ENCODE measurements at regions of chr13 and their contacts with region 1.

Region 1: GRCh38 chr13:81017513-81018152 is 676.7 kb upstream of the SPRY2 start:
- DNase-seq: peak; percentile 61
- H3K4me3 Mint-ChIP-seq: no peak overlapping the region
- H3K27ac Mint-ChIP-seq: no peak overlapping the region
- H3K4me1 Mint-ChIP-seq: no peaks in the 10 kb centered on the region
- H3K27me3 Mint-ChIP-seq: no peaks in the 10 kb centered on the region
- CTCF ChIP-seq: peak; percentile 39

Region 2: GRCh38 chr13:79423801-79424642 is 1593.6 kb before region 1 on chr13:
- CTCF ChIA-PET with region 1: interaction called, 6 read pairs
- POLR2A ChIA-PET with region 1: no interaction called
- intact Hi-C with region 1: loop called (anchors 5 kb)
- DNase-seq: peak; percentile 61
- H3K4me3 Mint-ChIP-seq: no peak overlapping the region
- H3K27ac Mint-ChIP-seq: no peak overlapping the region
- H3K4me1 Mint-ChIP-seq: no peaks in the 10 kb centered on the region
- H3K27me3 Mint-ChIP-seq: no peaks in the 10 kb centered on the region
- CTCF ChIP-seq: peak; percentile 48

Region 3: GRCh38 chr13:79548902-79549301 is 1468.7 kb before region 1 on chr13:
- CTCF ChIA-PET with region 1: no interaction called
- POLR2A ChIA-PET with region 1: no interaction called
- intact Hi-C with region 1: loop called (anchors 1 kb)
- DNase-seq: peak; percentile 45
- H3K4me3 Mint-ChIP-seq: no peak overlapping the region
- H3K27ac Mint-ChIP-seq: peak overlapping the region; percentile 79
- H3K4me1 Mint-ChIP-seq: peaks cover 7% of the 10 kb centered on the region
- H3K27me3 Mint-ChIP-seq: no peaks in the 10 kb centered on the region
- CTCF ChIP-seq: peak; percentile 34

Region 4: DNA sequence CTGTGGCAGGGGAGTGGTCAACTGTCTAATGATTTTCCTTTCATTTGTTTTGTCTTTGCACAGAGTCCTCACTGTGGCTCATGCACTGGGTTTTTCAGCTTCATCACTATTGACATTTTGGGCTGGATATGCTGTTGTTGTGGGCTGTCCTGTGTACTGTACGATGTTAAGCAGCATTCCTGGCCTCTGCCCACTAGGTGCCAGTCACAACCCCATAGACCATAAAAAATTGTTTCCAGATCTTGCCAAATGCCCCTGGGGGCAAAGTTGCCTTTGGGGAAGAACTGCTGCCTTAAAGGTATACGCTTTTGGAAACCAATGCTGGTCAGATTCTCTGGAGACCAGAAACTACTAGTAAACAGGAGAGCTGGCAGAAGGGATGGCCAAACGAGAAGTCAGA is 987.1 kb before region 1 on chr13:
- CTCF ChIA-PET with region 1: interaction called, 4 read pairs
- POLR2A ChIA-PET with region 1: no interaction called
- intact Hi-C with region 1: loop called (anchors 1 kb)
- DNase-seq: peak; percentile 84
- H3K4me3 Mint-ChIP-seq: no peak overlapping the region
- H3K27ac Mint-ChIP-seq: no peak overlapping the region
- H3K4me1 Mint-ChIP-seq: peaks cover 5% of the 10 kb centered on the region
- H3K27me3 Mint-ChIP-seq: no peaks in the 10 kb centered on the region
- CTCF ChIP-seq: peak; percentile 63

Region 5: DNA sequence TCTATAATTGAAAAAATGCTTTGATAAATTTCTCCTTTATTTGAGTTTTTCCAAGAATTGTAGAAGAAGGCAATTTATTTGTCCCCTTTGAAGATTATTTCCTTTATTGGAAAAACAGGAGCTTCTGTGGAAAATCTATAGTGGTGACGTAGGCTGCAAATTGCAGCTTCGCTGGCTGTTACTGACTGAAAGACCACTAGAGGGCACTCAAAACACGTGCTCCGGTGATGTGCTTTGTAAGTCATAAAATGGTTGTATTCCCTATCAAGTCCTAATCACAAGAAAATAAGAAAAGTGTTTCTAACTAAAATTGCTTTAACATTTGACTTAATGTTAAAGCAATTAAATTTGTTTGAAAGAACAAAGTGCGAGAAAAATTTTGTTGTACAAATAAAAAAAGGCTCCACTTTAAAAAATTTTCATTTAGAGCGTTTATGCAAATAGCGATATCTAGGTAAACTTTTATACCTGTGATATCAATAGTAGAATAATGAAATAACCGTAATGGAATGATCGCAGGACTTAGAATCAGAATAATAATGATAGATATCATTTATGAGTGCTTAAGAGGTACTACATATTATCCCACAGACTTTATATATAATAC is 38.5 kb before region 1 on chr13:
- CTCF ChIA-PET with region 1: interaction called, 43 read pairs
- POLR2A ChIA-PET with region 1: no interaction called
- intact Hi-C with region 1: loop called (anchors 2 kb)
- DNase-seq: peak; percentile 65
- H3K4me3 Mint-ChIP-seq: no peak overlapping the region
- H3K27ac Mint-ChIP-seq: no peak overlapping the region
- H3K4me1 Mint-ChIP-seq: no peaks in the 10 kb centered on the region
- H3K27me3 Mint-ChIP-seq: no peaks in the 10 kb centered on the region
- CTCF ChIP-seq: peak; percentile 81

Region 6: GRCh38 chr13:81207636-81208035 is 190.0 kb after region 1 on chr13:
- CTCF ChIA-PET with region 1: no interaction called
- POLR2A ChIA-PET with region 1: no interaction called
- intact Hi-C with region 1: no loop called
- DNase-seq: no peak
- H3K4me3 Mint-ChIP-seq: no peak overlapping the region
- H3K27ac Mint-ChIP-seq: no peak overlapping the region
- H3K4me1 Mint-ChIP-seq: no peaks in the 10 kb centered on the region
- H3K27me3 Mint-ChIP-seq: no peaks in the 10 kb centered on the region
- CTCF ChIP-seq: no peak

Region 7: GRCh38 chr13:81302125-81302524 is 284.5 kb after region 1 on chr13:
- CTCF ChIA-PET with region 1: no interaction called
- POLR2A ChIA-PET with region 1: no interaction called
- intact Hi-C with region 1: no loop called
- DNase-seq: no peak
- H3K4me3 Mint-ChIP-seq: no peak overlapping the region
- H3K27ac Mint-ChIP-seq: no peak overlapping the region
- H3K4me1 Mint-ChIP-seq: peaks cover 11% of the 10 kb centered on the region
- H3K27me3 Mint-ChIP-seq: no peaks in the 10 kb centered on the region
- CTCF ChIP-seq: no peak

Region 8: DNA sequence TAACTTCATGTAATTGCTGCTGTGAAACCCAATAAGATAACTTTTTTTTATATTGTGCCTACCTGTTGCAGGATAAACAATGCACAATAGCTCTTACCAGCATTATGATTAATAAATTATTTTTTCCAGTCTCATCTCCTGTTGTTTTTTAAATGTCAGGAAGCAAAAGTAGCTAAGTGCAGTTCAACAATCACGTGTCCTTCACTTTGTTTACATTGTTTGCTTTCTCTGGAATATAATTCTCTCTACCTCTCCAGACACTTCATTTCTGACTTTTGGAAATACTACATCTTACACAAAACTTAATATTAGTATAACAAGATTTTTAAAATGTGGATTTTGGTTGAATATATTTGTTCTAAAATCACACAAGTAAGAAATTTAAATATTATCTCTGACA is 1505.2 kb after region 1 on chr13:
- CTCF ChIA-PET with region 1: no interaction called
- POLR2A ChIA-PET with region 1: no interaction called
- intact Hi-C with region 1: no loop called
- DNase-seq: no peak
- H3K4me3 Mint-ChIP-seq: no peak overlapping the region
- H3K27ac Mint-ChIP-seq: no peak overlapping the region
- H3K4me1 Mint-ChIP-seq: no peaks in the 10 kb centered on the region
- H3K27me3 Mint-ChIP-seq: no peaks in the 10 kb centered on the region
- CTCF ChIP-seq: no peak

Measured in MCF 10A (cell line).